ENCODE measurements at regions of chr13 and their contacts with region 1.

Region 1: DNA sequence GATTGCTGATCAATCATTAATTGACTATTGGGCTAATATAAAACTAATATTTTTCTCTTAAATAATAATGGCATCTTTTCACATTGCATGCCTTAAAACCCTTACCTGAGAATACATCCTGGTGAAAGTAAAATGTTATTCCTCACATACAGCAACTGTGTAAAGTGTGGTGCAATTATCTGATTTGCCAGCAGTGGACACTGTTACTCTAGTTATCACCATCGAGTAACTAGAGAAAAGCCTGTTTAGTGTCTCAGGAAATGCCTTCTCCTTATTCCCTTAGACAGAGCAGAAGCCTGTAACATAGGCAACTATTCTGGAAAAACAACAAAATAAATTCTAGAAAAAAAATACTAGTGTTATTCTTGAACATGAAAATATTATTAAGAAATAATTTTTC is 459.8 kb downstream of the FGF14 start:
- DNase-seq: peak; percentile 23
- H3K4me3 ChIP-seq: no peak overlapping the region
- H3K27ac ChIP-seq: no peak overlapping the region
- H3K4me1 ChIP-seq: no peaks in the 10 kb centered on the region
- H3K27me3 ChIP-seq: no peaks in the 10 kb centered on the region
- CTCF ChIP-seq: peak; percentile 53

Region 2: GRCh38 chr13:102141625-102142472 is 199.8 kb after region 1 on chr13:
- intact Hi-C with region 1: loop called (anchors 10 kb)
- DNase-seq: no peak
- H3K4me3 ChIP-seq: no peak overlapping the region
- H3K27ac ChIP-seq: no peak overlapping the region
- H3K4me1 ChIP-seq: no peaks in the 10 kb centered on the region
- H3K27me3 ChIP-seq: no peaks in the 10 kb centered on the region
- CTCF ChIP-seq: peak; percentile 51

Region 3: GRCh38 chr13:102460801-102461200 is 518.8 kb after region 1 on chr13:
- intact Hi-C with region 1: loop called (anchors 5 kb)
- DNase-seq: no peak
- H3K4me3 ChIP-seq: no peak overlapping the region
- H3K27ac ChIP-seq: no peak overlapping the region
- H3K4me1 ChIP-seq: no peaks in the 10 kb centered on the region
- H3K27me3 ChIP-seq: no peaks in the 10 kb centered on the region
- CTCF ChIP-seq: no peak

Region 4: DNA sequence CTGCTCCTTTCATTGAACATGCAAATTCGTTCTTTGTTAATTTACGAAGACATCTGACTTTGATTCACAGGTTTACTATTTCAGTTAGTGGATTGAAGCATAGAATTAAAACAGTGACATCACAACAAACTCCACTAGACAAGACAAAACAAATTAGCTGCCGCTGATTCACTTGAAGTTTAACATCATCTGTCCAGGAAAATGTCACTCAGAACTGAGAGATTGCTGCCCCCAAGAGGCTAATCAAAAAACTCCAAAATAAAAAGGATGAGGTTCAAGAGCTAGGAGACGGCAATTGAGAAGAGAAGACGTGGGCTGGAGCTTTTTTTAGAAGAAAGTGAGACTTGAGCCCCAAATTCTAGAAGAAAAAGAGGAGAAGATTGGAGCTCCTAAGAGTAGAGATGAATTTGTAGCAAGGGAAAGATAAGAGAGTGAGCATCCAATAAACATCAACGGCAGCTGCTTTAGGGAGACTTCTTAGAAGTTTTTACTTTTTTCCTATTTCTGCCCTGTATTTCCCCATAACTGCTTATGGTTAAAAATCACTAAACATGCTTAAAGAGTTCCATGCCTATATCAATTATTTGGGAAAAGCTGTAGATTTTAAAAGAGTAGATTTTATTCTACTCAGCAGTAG is 614.0 kb after region 1 on chr13:
- intact Hi-C with region 1: loop called (anchors 5 kb)
- DNase-seq: no peak
- H3K4me3 ChIP-seq: no peak overlapping the region
- H3K27ac ChIP-seq: no peak overlapping the region
- H3K4me1 ChIP-seq: no peaks in the 10 kb centered on the region
- H3K27me3 ChIP-seq: no peaks in the 10 kb centered on the region
- CTCF ChIP-seq: peak; percentile 16